ENCODE measurements at regions of chr4 and their contacts with region 1.

Region 1: DNA sequence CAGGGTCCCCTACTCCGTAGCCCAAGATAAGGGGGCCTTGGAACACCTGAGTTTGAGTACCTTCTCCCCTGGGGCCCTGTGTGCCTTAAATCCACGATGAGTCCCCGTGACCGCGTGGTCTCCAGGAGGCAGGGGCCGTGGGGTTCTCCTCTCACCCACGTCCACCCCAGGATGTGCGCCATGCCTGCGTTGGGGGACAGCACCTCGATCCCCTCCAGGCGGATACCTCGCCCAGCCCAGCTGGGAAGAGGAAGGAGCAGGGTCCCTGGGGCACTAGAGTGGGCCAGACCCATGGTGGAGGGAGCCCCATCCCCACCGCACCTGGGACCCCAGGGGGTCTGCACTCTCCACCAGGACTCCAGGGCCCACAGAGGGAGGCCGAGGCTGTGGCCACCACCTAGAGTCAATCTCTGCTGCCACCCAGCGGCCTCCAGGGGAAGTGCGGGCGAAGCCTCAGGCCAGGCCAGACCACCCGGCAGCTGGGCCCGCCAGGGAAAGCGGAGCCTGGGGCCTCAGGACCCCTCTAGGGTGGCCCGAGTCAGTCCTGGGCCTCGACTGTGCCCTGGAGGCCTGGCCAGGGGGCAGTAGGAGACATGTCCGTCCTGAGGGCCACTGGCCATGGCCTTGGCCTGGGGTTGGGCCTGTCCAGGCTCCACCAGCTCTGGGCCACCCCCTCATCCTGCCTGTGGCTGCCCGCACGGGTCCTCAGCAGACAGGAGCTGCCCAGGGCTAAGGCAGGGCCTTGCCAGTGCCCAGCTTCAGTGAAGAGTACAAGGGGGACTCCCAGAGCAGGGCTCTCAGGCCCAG is 55.0 kb downstream of the FAM53A start:
- DNase-seq: peak; percentile 46 to 72 (median 64)
- H3K4me3 ChIP-seq: no peak overlapping the region
- H3K4me3 Mint-ChIP-seq: no peak overlapping the region
- H3K27ac ChIP-seq: no peak overlapping the region
- H3K27ac Mint-ChIP-seq: no peak overlapping the region
- H3K4me1 ChIP-seq: no peaks in the 10 kb centered on the region
- H3K4me1 Mint-ChIP-seq: no peaks in the 10 kb centered on the region
- H3K27me3 ChIP-seq: no peaks in the 10 kb centered on the region
- H3K27me3 Mint-ChIP-seq: no peaks in the 10 kb centered on the region

Region 2: GRCh38 chr4:1351854-1352633 is 277.1 kb before region 1 on chr4:
- CTCF ChIA-PET with region 1: interaction called, 16 read pairs
- POLR2A ChIA-PET with region 1: no interaction called
- intact Hi-C with region 1: no loop called
- DNase-seq: peak; percentile 81 to 86 (median 83)
- H3K4me3 ChIP-seq: no peak overlapping the region
- H3K4me3 Mint-ChIP-seq: peak overlapping the region in 1 of 8 donors; percentile 57
- H3K27ac ChIP-seq: no peak overlapping the region
- H3K27ac Mint-ChIP-seq: peak overlapping the region; percentile 68 to 93 (median 85)
- H3K4me1 ChIP-seq: peaks cover 20% of the 10 kb centered on the region
- H3K4me1 Mint-ChIP-seq: peaks cover 16 to 43% (median 20%) of the 10 kb centered on the region in 4 donors
- H3K27me3 ChIP-seq: no peaks in the 10 kb centered on the region
- H3K27me3 Mint-ChIP-seq: no peaks in the 10 kb centered on the region

Region 3: GRCh38 chr4:1533401-1534064 is 95.6 kb before region 1 on chr4:
- CTCF ChIA-PET with region 1: no interaction called
- POLR2A ChIA-PET with region 1: no interaction called
- intact Hi-C with region 1: no loop called
- DNase-seq: no peak
- H3K4me3 ChIP-seq: no peak overlapping the region
- H3K4me3 Mint-ChIP-seq: no peak overlapping the region
- H3K27ac ChIP-seq: no peak overlapping the region
- H3K27ac Mint-ChIP-seq: no peak overlapping the region
- H3K4me1 ChIP-seq: no peaks in the 10 kb centered on the region
- H3K4me1 Mint-ChIP-seq: no peaks in the 10 kb centered on the region
- H3K27me3 ChIP-seq: no peaks in the 10 kb centered on the region
- H3K27me3 Mint-ChIP-seq: peaks cover 12 to 22% of the 10 kb centered on the region in 2 donors

Region 4: DNA sequence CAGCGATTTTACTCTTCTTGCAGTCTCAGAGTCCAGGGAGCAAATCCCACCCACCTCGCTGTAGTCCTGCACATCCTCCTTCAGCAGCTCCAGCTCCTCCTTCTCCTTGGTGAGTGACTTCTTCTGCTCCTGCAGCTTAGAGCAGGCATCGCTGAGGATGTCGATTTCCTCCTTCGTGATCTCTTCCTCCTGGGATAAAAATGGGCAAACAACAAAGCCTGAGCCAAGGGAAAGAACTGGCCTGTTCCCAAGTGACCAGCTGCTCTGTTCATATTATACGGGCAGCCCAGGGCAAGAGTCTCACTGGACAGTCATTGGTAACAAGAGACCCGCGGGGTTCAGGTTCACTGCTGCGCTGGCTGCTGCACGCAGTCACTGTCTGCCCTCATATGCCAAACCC is 190.2 kb after region 1 on chr4:
- CTCF ChIA-PET with region 1: no interaction called
- POLR2A ChIA-PET with region 1: no interaction called
- intact Hi-C with region 1: no loop called
- DNase-seq: no peak
- H3K4me3 ChIP-seq: no peak overlapping the region
- H3K4me3 Mint-ChIP-seq: no peak overlapping the region
- H3K27ac ChIP-seq: no peak overlapping the region
- H3K27ac Mint-ChIP-seq: peak overlapping the region in 1 of 7 donors; percentile 29
- H3K4me1 ChIP-seq: no peaks in the 10 kb centered on the region
- H3K4me1 Mint-ChIP-seq: no peaks in the 10 kb centered on the region
- H3K27me3 ChIP-seq: no peaks in the 10 kb centered on the region
- H3K27me3 Mint-ChIP-seq: no peaks in the 10 kb centered on the region

Measured in CD4-positive, alpha-beta memory T cell (primary cell).